GM13977 (cell line): ENCODE measurements at regions of chr13 and their contacts with region 1.

Region 1: DNA sequence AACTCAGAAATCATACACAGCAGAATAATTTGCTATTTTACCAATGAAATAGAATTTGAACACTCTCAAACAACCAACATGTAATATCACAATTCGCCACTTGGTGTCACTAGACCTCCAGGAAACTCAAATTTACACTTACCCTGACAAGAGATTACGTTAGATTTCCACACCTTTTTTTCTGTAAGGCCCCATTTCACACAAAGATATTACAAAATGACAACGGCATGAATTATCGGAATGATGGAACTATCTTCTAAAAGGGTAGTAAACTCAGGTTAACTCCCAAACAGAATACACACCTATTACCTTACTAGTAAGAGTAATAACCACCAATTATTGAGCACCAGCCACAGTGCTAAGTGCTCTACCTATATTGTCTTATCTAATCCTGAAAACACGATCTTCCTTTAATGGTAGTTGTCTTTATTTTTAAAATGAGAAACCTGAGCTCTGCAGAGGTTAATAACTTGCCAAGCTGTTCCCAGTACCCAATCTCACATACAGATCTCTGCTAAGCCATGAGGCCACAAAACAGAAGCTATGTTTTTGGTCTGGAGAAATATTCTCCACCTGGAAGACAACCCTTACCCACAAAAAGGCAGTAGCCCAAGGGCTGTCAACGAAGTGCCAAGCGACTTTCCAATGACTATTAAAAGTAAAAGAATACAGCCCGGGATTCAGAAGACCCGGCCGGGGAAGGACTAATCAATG is 152.4 kb downstream of the DCLK1 start:
- DNase-seq: peak; percentile 52
- CTCF ChIP-seq: peak; percentile 60

Region 2: GRCh38 chr13:35448465-35448864 is 530.3 kb before region 1 on chr13:
- in situ Hi-C with region 1: no loop called
- DNase-seq: no peak
- CTCF ChIP-seq: no peak

Region 3: GRCh38 chr13:36251526-36251925 is 272.8 kb after region 1 on chr13:
- in situ Hi-C with region 1: loop called (anchors 25 kb)
- DNase-seq: no peak
- CTCF ChIP-seq: no peak